Tibial artery (tissue), 4 donors: ENCODE measurements at regions of chr16 and their contacts with region 1.

Region 1: DNA sequence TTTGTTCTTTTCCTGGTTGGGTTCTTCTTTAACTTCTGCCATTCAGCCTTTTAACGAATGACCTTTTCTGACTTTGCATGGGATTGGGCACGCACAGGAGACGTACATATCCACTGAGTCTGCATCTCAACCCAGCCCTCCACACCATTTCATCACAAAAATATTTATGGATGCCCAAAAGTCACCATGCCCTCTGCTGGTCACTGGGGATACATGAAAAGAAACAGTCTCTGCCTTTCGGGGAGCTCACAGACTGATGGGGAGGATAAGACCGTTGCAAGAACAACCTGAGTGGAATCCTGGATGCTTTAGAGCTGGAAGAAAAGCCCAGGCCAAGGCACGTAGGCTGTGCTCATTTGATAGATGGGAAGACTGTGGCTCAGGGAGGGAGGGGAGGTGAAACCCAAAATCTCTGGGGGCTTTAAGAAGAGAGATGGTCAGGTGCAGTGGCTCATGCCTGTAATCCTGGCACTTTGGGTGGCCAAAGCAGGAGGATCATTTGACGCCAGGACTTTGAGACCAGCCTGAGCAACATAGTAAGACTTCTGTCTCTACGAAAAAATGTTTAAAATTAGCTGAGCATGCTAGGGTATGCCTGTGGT is 7.9 kb upstream of the MT2A start:
- DNase-seq: peak in 1 of 2 donors; percentile 46
- H3K4me3 ChIP-seq: no peak overlapping the region
- H3K27ac ChIP-seq: no peak overlapping the region
- H3K4me1 ChIP-seq: peaks cover 0 to 2% (median 0%) of the 10 kb centered on the region in 4 donors
- H3K27me3 ChIP-seq: peaks cover 0 to 3% of the 10 kb centered on the region in 2 donors
- CTCF ChIP-seq: peak; percentile 55 to 64

Region 2: GRCh38 chr16:56519459-56520250 is 80.8 kb before region 1 on chr16 and contains the start of gene BBS2:
- intact Hi-C with region 1: loop called (anchors 5 kb)
- DNase-seq: peak; percentile 86 to 92
- H3K4me3 ChIP-seq: peak within 1 kb of the TSS; percentile 96
- H3K27ac ChIP-seq: peak within 1 kb of the TSS; percentile 93 to 94
- H3K4me1 ChIP-seq: peaks cover 0 to 41% (median 32%) of the 10 kb centered on the region in 4 donors
- H3K27me3 ChIP-seq: no peaks in the 10 kb centered on the region
- CTCF ChIP-seq: peak in 1 of 2 experiments; percentile 26

Region 3: GRCh38 chr16:56715120-56715519 is 114.6 kb after region 1 on chr16:
- intact Hi-C with region 1: no loop called
- DNase-seq: no peak
- H3K4me3 ChIP-seq: no peak overlapping the region
- H3K27ac ChIP-seq: no peak overlapping the region
- H3K4me1 ChIP-seq: no peaks in the 10 kb centered on the region
- H3K27me3 ChIP-seq: peaks cover 0 to 6% of the 10 kb centered on the region in 2 donors
- CTCF ChIP-seq: no peak